ENCODE measurements at regions of chr16 and their contacts with region 1.

Region 1: DNA sequence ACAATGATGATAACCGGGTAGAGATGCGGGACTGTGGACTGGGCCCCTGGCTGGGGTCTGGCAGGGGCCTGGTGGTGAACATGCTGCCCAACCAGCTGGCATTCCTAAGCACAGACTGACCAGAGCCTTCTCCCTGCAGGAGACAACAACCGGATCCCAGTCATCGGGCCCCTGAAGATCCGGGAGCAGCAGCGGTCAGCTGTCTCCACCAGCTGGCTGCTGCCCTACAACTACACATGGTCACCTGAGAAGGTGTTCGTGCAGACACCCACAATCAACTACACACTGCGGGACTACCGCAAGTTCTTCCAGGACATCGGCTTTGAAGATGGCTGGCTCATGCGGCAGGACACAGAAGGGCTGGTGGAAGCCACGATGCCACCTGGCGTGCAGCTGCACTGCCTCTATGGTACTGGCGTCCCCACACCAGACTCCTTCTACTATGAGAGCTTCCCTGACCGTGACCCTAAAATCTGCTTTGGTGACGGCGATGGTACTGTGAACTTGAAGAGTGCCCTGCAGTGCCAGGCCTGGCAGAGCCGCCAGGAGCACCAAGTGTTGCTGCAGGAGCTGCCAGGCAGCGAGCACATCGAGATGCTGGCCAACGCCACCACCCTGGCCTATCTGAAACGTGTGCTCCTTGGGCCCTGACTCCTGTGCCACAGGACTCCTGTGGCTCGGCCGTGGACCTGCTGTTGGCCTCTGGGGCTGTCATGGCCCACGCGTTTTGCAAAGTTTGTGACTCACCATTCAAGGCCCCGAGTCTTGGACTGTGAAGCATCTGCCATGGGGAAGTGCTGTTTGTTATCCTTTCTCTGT is 5.1 kb upstream of the SLC7A6 start:
- DNase-seq: no peak
- H3K4me3 ChIP-seq: no peak overlapping the region
- H3K27ac ChIP-seq: no peak overlapping the region
- H3K4me1 ChIP-seq: no peaks in the 10 kb centered on the region; a peak in 1 of 7 replicates
- H3K27me3 ChIP-seq: peaks cover 0 to 7% (median 0%) of the 10 kb centered on the region in 4 experiments; a peak in 2 of 7 replicates
- CTCF ChIP-seq: no peak
- EP300 ChIP-seq: no peak
- POLR2A ChIP-seq: no peak
- RAD21 ChIP-seq: no peak

Region 2: DNA sequence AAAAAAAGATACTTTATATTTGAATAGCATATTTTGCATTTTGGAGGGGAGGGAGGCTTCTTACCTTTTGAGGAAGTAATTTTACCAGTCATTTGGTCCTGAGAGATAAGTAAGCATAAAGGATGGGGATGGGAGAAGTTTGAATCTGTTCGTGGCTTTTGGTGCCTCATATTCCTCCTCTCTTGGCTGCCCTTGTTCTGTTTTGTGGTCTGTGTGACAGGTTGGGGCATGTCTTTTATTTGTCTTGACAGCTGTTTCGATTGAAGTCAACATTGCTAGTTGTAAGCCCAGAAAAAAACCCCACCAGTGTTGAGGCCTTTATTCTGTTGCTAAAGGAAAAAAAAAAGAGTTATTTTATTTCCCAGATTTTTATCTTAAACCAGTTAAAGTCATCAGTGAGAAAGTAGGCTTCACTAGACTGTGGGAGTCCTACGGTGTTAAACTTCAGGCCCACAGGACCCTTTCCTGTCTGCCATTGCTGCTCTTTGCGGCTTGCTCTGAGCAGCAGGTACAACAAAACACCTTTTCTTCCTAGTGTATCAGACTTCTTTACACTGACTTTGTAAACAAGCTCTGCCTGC is 16.5 kb after region 1 on chr16:
- CTCF ChIA-PET with region 1: interaction called, 233 read pairs
- POLR2A ChIA-PET with region 1: interaction called, 9 read pairs
- DNase-seq: no peak
- H3K4me3 ChIP-seq: no peak overlapping the region
- H3K27ac ChIP-seq: no peak overlapping the region
- H3K4me1 ChIP-seq: no peaks in the 10 kb centered on the region
- H3K27me3 ChIP-seq: no peaks in the 10 kb centered on the region
- CTCF ChIP-seq: no peak
- EP300 ChIP-seq: no peak
- POLR2A ChIP-seq: no peak
- RAD21 ChIP-seq: no peak

Region 3: DNA sequence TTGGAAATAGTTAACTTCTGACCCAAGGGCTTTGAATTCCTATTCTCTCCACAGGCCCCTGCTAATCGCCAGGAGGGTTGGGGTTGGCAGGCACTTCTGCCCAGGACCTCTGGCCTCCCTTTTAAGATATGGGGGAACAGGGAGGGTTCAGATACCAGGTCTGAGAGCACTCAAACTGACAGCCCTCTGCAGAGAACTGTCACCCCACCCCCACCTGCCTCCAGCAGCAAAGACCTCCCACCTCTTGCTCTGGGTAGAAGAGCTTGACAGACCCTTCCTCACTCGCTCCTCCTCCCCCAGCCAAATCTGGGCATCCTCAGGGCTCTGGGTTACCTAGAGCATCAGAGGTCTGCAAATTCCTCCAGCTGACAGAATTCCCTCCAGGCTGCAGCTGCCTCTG is 397.5 kb after region 1 on chr16:
- CTCF ChIA-PET with region 1: no interaction called
- POLR2A ChIA-PET with region 1: no interaction called
- DNase-seq: no peak
- H3K4me3 ChIP-seq: no peak overlapping the region
- H3K27ac ChIP-seq: no peak overlapping the region
- H3K4me1 ChIP-seq: peaks cover 0 to 6% (median 0%) of the 10 kb centered on the region in 4 experiments; a peak in 2 of 7 replicates
- H3K27me3 ChIP-seq: no peaks in the 10 kb centered on the region
- CTCF ChIP-seq: no peak
- EP300 ChIP-seq: no peak
- POLR2A ChIP-seq: no peak
- RAD21 ChIP-seq: no peak